Vagina (tissue), 2 donors: ENCODE measurements at regions of chr11 and their contacts with region 1.

Region 1: GRCh38 chr11:119222308-119222707 is 16.2 kb downstream of the CBL start:
- DNase-seq: no peak
- H3K4me3 ChIP-seq: no peak overlapping the region
- H3K27ac ChIP-seq: no peak overlapping the region
- H3K4me1 ChIP-seq: peaks cover 12% of the 10 kb centered on the region
- H3K27me3 ChIP-seq: no peaks in the 10 kb centered on the region
- CTCF ChIP-seq: no peak
- POLR2A ChIP-seq: no peak

Region 2: DNA sequence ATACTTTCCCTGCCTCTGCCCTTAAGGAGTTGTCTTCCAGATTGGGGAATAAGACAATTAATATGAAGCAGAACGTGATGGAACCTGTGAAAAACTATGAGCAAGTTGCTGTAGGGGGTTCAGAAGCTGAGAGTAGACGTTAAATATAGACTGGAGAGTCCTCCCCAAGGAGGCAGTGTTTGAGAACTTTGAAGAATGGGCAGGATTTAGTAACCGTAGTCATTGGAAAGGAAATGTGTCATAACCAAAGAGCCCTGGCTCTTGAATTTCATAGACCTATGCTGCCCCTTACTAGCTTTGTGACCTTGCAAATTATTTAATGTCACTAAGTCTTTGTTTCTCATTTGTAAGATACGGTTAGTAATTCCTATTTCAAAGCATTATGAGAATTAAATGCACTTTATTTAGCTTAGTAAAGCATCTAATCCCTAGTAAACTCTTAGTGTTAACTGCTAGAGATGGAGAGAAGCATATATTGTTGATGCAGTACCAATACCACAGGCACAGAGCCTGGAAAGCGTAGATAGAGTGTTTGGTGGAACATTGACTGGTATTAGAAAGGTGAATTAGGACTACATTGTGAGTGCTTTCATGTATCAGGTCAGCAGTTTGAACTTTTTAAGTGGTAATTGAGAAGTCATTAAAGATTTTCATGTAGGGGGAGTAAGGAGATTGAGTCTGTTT is 40.5 kb after region 1 on chr11:
- intact Hi-C with region 1: loop called (anchors 2 kb)
- DNase-seq: no peak
- H3K4me3 ChIP-seq: no peak overlapping the region
- H3K27ac ChIP-seq: no peak overlapping the region
- H3K4me1 ChIP-seq: peaks cover 19% of the 10 kb centered on the region
- H3K27me3 ChIP-seq: no peaks in the 10 kb centered on the region
- CTCF ChIP-seq: no peak
- POLR2A ChIP-seq: no peak